ENCODE measurements at regions of chr18 and their contacts with region 1.

Region 1: GRCh38 chr18:59697236-59697932 is at the start of gene CCBE1:
- DNase-seq: peak; percentile 15 to 80
- ATAC-seq: peak; percentile 77 to 92 (median 86)
- H3K4me3 ChIP-seq: peak within 1 kb of the TSS; percentile 9 to 69 (median 49)
- H3K27ac ChIP-seq: peak within 1 kb of the TSS in 3 of 10 donors; percentile 6 to 41 (median 12)
- H3K4me1 ChIP-seq: peaks cover 4 to 25% (median 12%) of the 10 kb centered on the region in 9 donors
- H3K27me3 ChIP-seq: peaks cover 8 to 66% (median 45%) of the 10 kb centered on the region in 7 donors
- CTCF ChIP-seq: peak; percentile 67 to 87 (median 76)
- total RNA-seq, gene CCBE1: 0.24 to 10.3 (median 2.2) TPM

Region 2: GRCh38 chr18:59141294-59142068 is 555.9 kb before region 1 on chr18:
- intact Hi-C with region 1: no loop called
- DNase-seq: no peak
- ATAC-seq: no peak
- H3K4me3 ChIP-seq: no peak overlapping the region
- H3K27ac ChIP-seq: no peak overlapping the region
- H3K4me1 ChIP-seq: peaks cover 0 to 22% (median 12%) of the 10 kb centered on the region in 9 donors
- H3K27me3 ChIP-seq: peaks cover 0 to 1% (median 0%) of the 10 kb centered on the region in 7 donors
- CTCF ChIP-seq: no peak

Region 3: DNA sequence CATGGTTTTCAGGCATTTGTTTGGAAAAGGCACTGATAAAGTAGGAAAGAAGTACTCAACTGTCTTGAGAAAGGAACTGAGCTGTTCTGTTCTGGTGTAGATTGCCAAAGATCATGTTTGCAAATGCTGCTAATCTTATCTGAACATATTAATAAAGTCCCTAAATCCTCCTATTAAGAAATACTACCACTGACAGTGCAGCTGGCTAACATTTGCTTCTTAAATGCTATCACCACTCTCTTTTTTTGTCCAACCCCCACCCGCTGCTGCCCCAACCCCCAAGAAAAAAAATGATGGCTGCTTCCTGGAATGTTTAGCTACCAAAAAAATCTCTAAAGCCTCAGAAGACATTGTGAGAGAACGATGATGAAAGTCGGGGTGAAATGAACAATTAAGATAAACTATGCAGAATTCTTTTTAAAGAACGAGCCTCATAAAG is 130.8 kb before region 1 on chr18:
- intact Hi-C with region 1: loop called in 1 of 10 experiments (anchors 10 kb)
- DNase-seq: no peak
- ATAC-seq: peak; percentile 25 to 72 (median 46)
- H3K4me3 ChIP-seq: no peak overlapping the region
- H3K27ac ChIP-seq: no peak overlapping the region
- H3K4me1 ChIP-seq: peaks cover 0 to 13% (median 0%) of the 10 kb centered on the region in 9 donors
- H3K27me3 ChIP-seq: no peaks in the 10 kb centered on the region
- CTCF ChIP-seq: no peak

Region 4: GRCh38 chr18:59748628-59749360 is 51.4 kb after region 1 on chr18:
- intact Hi-C with region 1: loop called in 1 of 10 experiments (anchors 5 kb)
- DNase-seq: no peak
- ATAC-seq: no peak
- H3K4me3 ChIP-seq: no peak overlapping the region
- H3K27ac ChIP-seq: no peak overlapping the region
- H3K4me1 ChIP-seq: no peaks in the 10 kb centered on the region
- H3K27me3 ChIP-seq: peaks cover 0 to 14% (median 0%) of the 10 kb centered on the region in 7 donors
- CTCF ChIP-seq: no peak

Measured in heart right ventricle (tissue), 16 donors.